ENCODE measurements at regions of chr15 and their contacts with region 1.

Region 1: GRCh38 chr15:51829360-51830275 is at the start of gene TMOD3:
- DNase-seq: peak; percentile 79 to 94 (median 84)
- ATAC-seq: peak; percentile 94
- H3K4me3 ChIP-seq: peak within 1 kb of the TSS; percentile 93
- H3K4me3 Mint-ChIP-seq: peak within 1 kb of the TSS; percentile 94 to 99 (median 98)
- H3K27ac ChIP-seq: peak within 1 kb of the TSS; percentile 85
- H3K27ac Mint-ChIP-seq: peak within 1 kb of the TSS; percentile 87 to 97 (median 94)
- H3K4me1 ChIP-seq: peaks cover 21 to 26% of the 10 kb centered on the region in 2 donors
- H3K4me1 Mint-ChIP-seq: peaks cover 30 to 51% (median 41%) of the 10 kb centered on the region in 7 donors
- H3K27me3 ChIP-seq: no peaks in the 10 kb centered on the region
- H3K27me3 Mint-ChIP-seq: peaks cover 0 to 8% (median 0%) of the 10 kb centered on the region in 5 donors
- total RNA-seq, gene TMOD3: 46.5 to 75.9 (median 50.4) TPM

Region 2: GRCh38 chr15:51861557-51862359 is 32.1 kb after region 1 on chr15:
- CTCF ChIA-PET with region 1: no interaction called
- POLR2A ChIA-PET with region 1: no interaction called
- intact Hi-C with region 1: loop called (anchors 1 to 5 kb)
- DNase-seq: peak in 8 of 9 donors; percentile 46 to 75 (median 64)
- ATAC-seq: peak; percentile 97
- H3K4me3 ChIP-seq: no peak overlapping the region
- H3K4me3 Mint-ChIP-seq: peak overlapping the region; percentile 45 to 78 (median 68)
- H3K27ac ChIP-seq: no peak overlapping the region
- H3K27ac Mint-ChIP-seq: peak overlapping the region; percentile 26 to 90 (median 73)
- H3K4me1 ChIP-seq: peaks cover 15 to 20% of the 10 kb centered on the region in 2 donors
- H3K4me1 Mint-ChIP-seq: peaks cover 34 to 68% (median 64%) of the 10 kb centered on the region in 7 donors
- H3K27me3 ChIP-seq: no peaks in the 10 kb centered on the region
- H3K27me3 Mint-ChIP-seq: no peaks in the 10 kb centered on the region

Region 3: DNA sequence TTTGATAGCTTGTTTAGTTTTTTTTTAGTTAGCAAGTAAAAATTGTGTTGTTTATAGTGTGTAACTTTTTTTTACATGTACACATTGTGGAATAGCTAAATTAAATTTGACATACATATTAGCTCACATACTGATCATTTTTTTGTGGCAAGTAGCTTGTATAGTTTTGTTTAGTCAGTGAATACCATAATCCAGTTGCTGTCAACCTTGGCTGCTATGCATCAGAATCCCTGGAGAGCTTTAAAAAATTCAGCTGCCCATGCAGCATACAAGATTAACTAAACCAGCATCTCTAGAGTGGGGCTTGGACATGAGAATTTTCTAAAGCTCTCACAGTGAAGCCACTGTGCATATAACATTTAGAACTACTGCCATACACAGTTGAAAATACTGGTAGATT is 53.8 kb after region 1 on chr15:
- CTCF ChIA-PET with region 1: no interaction called
- POLR2A ChIA-PET with region 1: interaction called, 3 read pairs
- intact Hi-C with region 1: loop called in 1 of 2 experiments (anchors 5 kb)
- DNase-seq: no peak
- ATAC-seq: no peak
- H3K4me3 ChIP-seq: no peak overlapping the region
- H3K4me3 Mint-ChIP-seq: no peak overlapping the region
- H3K27ac ChIP-seq: no peak overlapping the region
- H3K27ac Mint-ChIP-seq: peak overlapping the region in 1 of 9 donors; percentile 76
- H3K4me1 ChIP-seq: peaks cover 0 to 2% of the 10 kb centered on the region in 2 donors
- H3K4me1 Mint-ChIP-seq: peaks cover 2 to 29% (median 18%) of the 10 kb centered on the region in 7 donors
- H3K27me3 ChIP-seq: no peaks in the 10 kb centered on the region
- H3K27me3 Mint-ChIP-seq: no peaks in the 10 kb centered on the region

Region 4: DNA sequence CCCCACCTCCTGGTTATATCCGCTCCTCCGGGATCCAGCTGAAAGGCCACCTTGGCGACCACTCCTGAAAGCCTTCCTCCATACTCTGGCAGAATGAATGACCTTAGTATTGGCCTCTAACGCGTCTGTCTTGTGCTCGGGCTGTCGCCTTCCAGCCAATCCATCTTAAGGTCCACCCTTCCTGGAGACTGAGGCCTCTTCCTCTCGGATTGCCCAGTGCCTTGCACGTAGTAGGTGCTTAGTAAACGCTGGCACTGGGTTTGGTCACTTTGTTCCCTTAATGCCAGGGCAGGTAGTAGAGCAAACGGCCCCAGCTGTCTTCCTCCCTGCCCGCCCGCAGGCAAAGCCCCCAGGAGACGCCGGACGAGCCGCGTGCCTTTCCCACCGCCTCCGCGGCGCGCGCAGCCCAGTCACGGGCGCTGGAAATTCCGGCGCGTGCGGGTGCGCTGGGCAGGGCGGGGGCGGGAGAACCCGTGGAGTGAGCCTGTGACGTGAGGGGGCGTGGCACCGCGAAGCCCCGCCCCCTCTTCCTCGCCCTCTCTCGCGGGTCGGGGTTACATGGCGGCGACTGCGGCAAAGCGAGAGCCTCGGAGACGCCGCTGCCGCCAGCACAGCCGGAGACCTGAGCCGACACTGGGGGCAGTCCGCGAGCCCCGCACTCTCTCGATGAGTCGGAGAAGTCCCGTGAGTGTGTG is 189.2 kb after region 1 on chr15 and contains the start of gene MAPK6:
- CTCF ChIA-PET with region 1: no interaction called
- POLR2A ChIA-PET with region 1: no interaction called
- intact Hi-C with region 1: loop called in 1 of 2 experiments (anchors 5 kb)
- DNase-seq: peak; percentile 91 to 96 (median 94)
- ATAC-seq: peak; percentile 95
- H3K4me3 ChIP-seq: peak within 1 kb of the TSS; percentile 79
- H3K4me3 Mint-ChIP-seq: peak within 1 kb of the TSS; percentile 90 to 99 (median 96)
- H3K27ac ChIP-seq: peak within 1 kb of the TSS; percentile 88
- H3K27ac Mint-ChIP-seq: peak within 1 kb of the TSS; percentile 88 to 100 (median 98)
- H3K4me1 ChIP-seq: peaks cover 9 to 29% of the 10 kb centered on the region in 2 donors
- H3K4me1 Mint-ChIP-seq: peaks cover 32 to 50% (median 39%) of the 10 kb centered on the region in 7 donors
- H3K27me3 ChIP-seq: no peaks in the 10 kb centered on the region
- H3K27me3 Mint-ChIP-seq: peaks cover 0 to 15% (median 0%) of the 10 kb centered on the region in 5 donors
- total RNA-seq, gene MAPK6: 19.2 to 44.1 (median 25.3) TPM

Region 5: GRCh38 chr15:52379395-52380106 is 549.9 kb after region 1 on chr15:
- CTCF ChIA-PET with region 1: no interaction called
- POLR2A ChIA-PET with region 1: no interaction called
- intact Hi-C with region 1: no loop called
- DNase-seq: no peak
- ATAC-seq: no peak
- H3K4me3 ChIP-seq: no peak overlapping the region
- H3K4me3 Mint-ChIP-seq: no peak overlapping the region
- H3K27ac ChIP-seq: no peak overlapping the region
- H3K27ac Mint-ChIP-seq: peak overlapping the region in 1 of 9 donors; percentile 51
- H3K4me1 ChIP-seq: no peaks in the 10 kb centered on the region
- H3K4me1 Mint-ChIP-seq: peaks cover 0 to 2% (median 0%) of the 10 kb centered on the region in 7 donors
- H3K27me3 ChIP-seq: no peaks in the 10 kb centered on the region
- H3K27me3 Mint-ChIP-seq: no peaks in the 10 kb centered on the region